CD4-positive, alpha-beta T cell (primary cell): ENCODE measurements at regions of chr6 and their contacts with region 1.

Region 1: DNA sequence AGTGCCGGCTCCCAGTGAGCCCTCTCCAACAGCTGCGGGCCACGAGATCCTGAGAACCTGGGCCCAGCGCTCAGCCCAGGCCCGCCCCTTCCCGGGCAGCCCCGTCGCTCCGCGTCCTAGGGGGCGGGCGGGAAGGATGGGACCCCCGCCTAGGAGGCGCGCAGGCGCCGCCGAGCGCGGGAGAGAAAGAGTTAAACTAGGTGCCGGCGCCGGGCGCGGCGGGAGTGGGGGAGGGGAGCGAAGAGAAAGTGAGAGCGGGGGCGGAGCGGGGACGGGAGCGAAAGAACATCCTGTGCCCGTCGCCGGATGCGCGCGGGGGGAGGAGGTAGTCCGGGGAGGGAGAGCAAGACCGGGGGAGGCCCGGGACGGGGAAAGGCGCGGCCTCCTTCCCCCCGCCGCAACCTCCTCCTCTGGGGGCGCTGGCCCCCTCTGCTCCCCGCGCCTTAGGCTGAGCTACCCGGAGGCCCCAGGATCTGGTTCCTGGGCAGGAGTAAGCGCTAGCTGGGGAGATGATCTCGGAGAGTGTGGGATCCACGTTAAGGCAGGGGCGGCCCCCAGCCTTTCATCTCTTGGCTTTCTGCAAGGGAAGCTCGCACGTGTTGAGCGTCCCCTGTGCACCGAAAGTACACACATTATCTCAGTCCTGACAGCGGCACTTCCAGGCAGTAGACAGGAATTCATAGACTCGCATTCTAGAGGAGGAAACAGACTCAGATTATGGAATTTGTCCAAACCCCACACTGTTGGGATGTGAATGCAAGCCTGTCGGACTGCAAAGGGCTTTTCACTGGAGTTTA is 4.9 kb upstream of the ARMC12 start:
- DNase-seq: peak; percentile 88 to 98 (median 94)
- ATAC-seq: peak; percentile 55
- H3K4me3 ChIP-seq: peak overlapping the region; percentile 87
- H3K4me3 Mint-ChIP-seq: peak overlapping the region; percentile 96
- H3K27ac ChIP-seq: peak overlapping the region; percentile 94 to 96
- H3K27ac Mint-ChIP-seq: peak overlapping the region; percentile 87
- H3K4me1 ChIP-seq: peaks cover 97% of the 10 kb centered on the region
- H3K4me1 Mint-ChIP-seq: peaks cover 92% of the 10 kb centered on the region
- H3K27me3 ChIP-seq: no peaks in the 10 kb centered on the region
- H3K27me3 Mint-ChIP-seq: no peaks in the 10 kb centered on the region
- CTCF ChIP-seq: no peak

Region 2: DNA sequence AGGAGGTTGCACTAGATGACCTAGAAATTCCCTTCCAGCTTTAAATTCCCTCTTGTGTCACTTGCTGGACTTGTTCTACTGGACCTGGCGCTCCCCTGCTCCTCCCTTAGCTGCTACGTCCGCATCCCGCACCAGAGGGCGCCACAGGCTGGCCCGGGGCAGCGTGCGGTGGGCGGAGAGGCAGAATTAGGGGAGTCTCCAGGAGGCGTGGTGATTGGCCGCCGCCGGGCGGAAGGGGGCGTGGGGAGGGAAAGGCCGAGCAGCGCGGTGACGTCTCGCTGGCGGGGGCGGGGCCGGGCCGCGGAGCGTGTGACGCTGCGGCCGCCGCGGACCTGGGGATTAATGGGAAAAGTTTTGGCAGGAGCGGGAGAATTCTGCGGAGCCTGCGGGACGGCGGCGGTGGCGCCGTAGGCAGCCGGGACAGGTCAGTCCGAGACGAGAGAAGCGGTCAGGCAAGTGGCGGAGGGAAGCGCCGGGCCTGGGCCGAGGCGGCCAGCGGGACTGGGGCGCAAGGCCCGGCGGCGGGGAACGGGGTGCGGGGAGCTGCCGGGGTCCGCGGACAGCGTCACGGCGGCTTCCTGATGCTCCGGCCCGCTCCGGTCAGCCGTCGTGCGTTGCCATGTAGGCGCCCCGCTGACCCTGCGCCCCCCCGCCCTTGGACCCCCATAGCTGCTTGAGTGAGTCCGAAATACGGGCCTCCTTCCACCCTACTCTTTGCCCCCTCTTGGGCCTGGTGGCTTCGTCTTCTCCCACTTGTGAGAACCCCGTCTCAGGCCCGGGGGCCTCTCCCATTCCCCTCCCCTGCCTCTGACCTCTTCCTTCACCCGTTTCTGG is 389.5 kb before region 1 on chr6 and contains the start of gene PPARD:
- CTCF ChIA-PET with region 1: no interaction called
- POLR2A ChIA-PET with region 1: interaction called, 5 read pairs
- intact Hi-C with region 1: loop called (anchors 2 to 5 kb)
- DNase-seq: peak; percentile 94 to 98 (median 97)
- ATAC-seq: peak; percentile 97
- H3K4me3 ChIP-seq: peak within 1 kb of the TSS; percentile 87
- H3K4me3 Mint-ChIP-seq: peak within 1 kb of the TSS; percentile 98
- H3K27ac ChIP-seq: peak within 1 kb of the TSS; percentile 70 to 87
- H3K27ac Mint-ChIP-seq: peak within 1 kb of the TSS; percentile 89
- H3K4me1 ChIP-seq: peaks cover 51% of the 10 kb centered on the region
- H3K4me1 Mint-ChIP-seq: peaks cover 59% of the 10 kb centered on the region
- H3K27me3 ChIP-seq: no peaks in the 10 kb centered on the region
- H3K27me3 Mint-ChIP-seq: no peaks in the 10 kb centered on the region
- CTCF ChIP-seq: peak; percentile 96
- total RNA-seq, gene PPARD: 34.1 to 37.0 TPM

Region 3: DNA sequence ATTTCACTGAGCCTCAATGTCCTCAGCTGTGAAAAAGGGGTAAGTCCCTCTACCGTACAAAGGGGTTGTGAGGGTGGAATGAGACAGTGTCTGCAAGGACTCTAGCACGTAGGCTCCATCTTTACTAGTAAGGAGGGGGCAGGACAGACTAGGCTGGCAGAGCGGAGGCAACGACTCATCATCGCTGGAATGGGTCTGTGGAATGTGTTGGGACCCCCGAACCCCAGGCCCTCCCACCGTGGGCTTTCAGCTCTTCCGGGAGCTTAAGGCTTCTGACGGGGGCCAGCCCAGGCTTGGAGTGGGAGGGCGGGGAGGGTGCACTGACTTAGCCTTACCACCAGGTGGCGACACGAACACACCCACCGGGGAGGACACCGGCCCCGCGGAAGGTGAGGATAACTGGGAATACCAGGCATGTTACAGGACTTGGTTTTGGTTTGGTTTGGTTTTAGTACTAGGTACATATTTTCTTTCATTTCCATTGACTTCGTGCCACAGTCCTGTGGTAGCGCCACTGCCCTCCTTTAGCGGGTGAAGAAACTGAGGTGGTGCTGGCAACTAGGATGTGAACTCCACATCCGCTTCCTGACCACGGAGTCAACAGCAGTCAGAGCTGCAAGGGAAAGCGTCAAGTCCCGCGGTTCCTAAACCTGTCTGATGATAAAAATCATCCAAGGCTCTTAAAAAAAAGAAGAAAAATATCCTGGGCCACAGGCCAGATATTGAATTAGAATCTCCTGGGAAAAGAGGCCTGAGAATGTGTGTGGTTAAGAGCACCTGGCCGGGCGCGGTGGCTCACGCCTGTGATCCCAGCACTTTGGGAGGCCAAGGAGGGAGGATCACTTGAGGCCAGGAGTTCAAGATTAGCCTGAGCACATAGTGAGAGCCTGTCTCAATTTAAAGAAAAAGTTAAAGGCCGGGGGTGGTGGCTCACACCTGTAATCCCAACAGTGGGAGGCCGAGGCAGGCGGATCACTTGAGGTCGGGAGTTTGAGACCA is 209.0 kb before region 1 on chr6:
- CTCF ChIA-PET with region 1: interaction called, 13 read pairs
- POLR2A ChIA-PET with region 1: interaction called, 3 read pairs
- intact Hi-C with region 1: loop called (anchors 1 kb)
- DNase-seq: peak; percentile 61 to 91 (median 66)
- ATAC-seq: peak; percentile 88
- H3K4me3 ChIP-seq: peak overlapping the region; percentile 35
- H3K4me3 Mint-ChIP-seq: peak overlapping the region; percentile 79
- H3K27ac ChIP-seq: no peak overlapping the region
- H3K27ac Mint-ChIP-seq: peak overlapping the region; percentile 82
- H3K4me1 ChIP-seq: peaks cover 31% of the 10 kb centered on the region
- H3K4me1 Mint-ChIP-seq: peaks cover 14% of the 10 kb centered on the region
- H3K27me3 ChIP-seq: no peaks in the 10 kb centered on the region
- H3K27me3 Mint-ChIP-seq: no peaks in the 10 kb centered on the region
- CTCF ChIP-seq: peak; percentile 98

Region 4: DNA sequence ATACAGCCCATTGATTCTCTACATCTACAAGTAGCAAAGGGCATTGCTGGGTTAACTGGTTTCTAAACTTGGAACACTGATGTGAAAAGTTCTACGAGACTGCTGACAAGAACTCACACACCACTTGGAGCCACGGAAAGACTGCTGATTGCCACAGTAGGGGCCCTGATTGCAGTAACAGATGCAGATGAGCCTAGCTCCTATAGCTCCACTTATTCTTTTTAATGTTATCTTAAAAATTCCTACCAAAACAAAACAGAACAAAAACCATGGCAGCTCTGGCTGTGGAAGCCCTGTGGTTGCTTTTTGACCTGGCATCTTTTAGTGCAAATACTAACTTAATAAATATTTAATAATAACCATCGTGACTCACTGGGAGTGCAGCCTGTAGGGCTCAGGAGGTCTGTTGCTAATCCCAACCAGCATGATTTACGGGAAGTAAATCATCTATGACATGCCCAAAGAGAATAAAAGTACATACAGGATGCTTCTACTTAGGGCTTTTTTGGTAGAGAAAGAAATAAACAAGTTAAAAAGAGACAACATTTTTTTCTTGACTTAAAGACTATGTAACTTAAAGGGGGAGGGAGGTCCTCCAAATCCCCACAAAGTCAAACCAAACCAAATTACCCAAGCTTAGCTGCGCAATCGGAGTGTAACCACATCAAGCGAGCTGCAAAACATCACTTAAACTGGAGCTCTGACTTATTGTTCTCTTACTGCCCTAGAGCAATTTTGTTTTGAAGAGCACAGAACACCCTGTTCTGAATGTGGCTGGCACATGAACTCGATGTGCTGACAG is 130.4 kb before region 1 on chr6:
- CTCF ChIA-PET with region 1: interaction called, 17 read pairs
- POLR2A ChIA-PET with region 1: interaction called, 96 read pairs
- intact Hi-C with region 1: loop called in 1 of 2 experiments (anchors 5 kb)
- DNase-seq: peak; percentile 50 to 93 (median 64)
- ATAC-seq: peak; percentile 74
- H3K4me3 ChIP-seq: peak overlapping the region; percentile 42
- H3K4me3 Mint-ChIP-seq: peak overlapping the region; percentile 82
- H3K27ac ChIP-seq: peak overlapping the region; percentile 52 to 82
- H3K27ac Mint-ChIP-seq: peak overlapping the region; percentile 85
- H3K4me1 ChIP-seq: peaks cover 70% of the 10 kb centered on the region
- H3K4me1 Mint-ChIP-seq: peaks cover 87% of the 10 kb centered on the region
- H3K27me3 ChIP-seq: no peaks in the 10 kb centered on the region
- H3K27me3 Mint-ChIP-seq: no peaks in the 10 kb centered on the region
- CTCF ChIP-seq: no peak

Region 5: GRCh38 chr6:35663447-35664235 is 68.3 kb before region 1 on chr6:
- CTCF ChIA-PET with region 1: interaction called, 17 read pairs
- POLR2A ChIA-PET with region 1: interaction called, 11 read pairs
- intact Hi-C with region 1: loop called in 1 of 2 experiments (anchors 2 kb)
- DNase-seq: peak in 4 of 14 experiments; percentile 30 to 56 (median 50)
- ATAC-seq: peak; percentile 77
- H3K4me3 ChIP-seq: peak overlapping the region; percentile 10
- H3K4me3 Mint-ChIP-seq: no peak overlapping the region
- H3K27ac ChIP-seq: peak overlapping the region; percentile 54 to 55
- H3K27ac Mint-ChIP-seq: no peak overlapping the region
- H3K4me1 ChIP-seq: peaks cover 47% of the 10 kb centered on the region
- H3K4me1 Mint-ChIP-seq: peaks cover 26% of the 10 kb centered on the region
- H3K27me3 ChIP-seq: no peaks in the 10 kb centered on the region
- H3K27me3 Mint-ChIP-seq: no peaks in the 10 kb centered on the region
- CTCF ChIP-seq: no peak

Region 6: GRCh38 chr6:35688581-35689322 is 43.2 kb before region 1 on chr6 and contains the start of gene FKBP5:
- CTCF ChIA-PET with region 1: interaction called, 20 read pairs
- POLR2A ChIA-PET with region 1: interaction called, 69 read pairs
- intact Hi-C with region 1: loop called (anchors 1 kb)
- DNase-seq: peak; percentile 73 to 94 (median 83)
- ATAC-seq: peak; percentile 88
- H3K4me3 ChIP-seq: peak within 1 kb of the TSS; percentile 98
- H3K4me3 Mint-ChIP-seq: peak within 1 kb of the TSS; percentile 99
- H3K27ac ChIP-seq: peak within 1 kb of the TSS; percentile 64 to 67
- H3K27ac Mint-ChIP-seq: peak within 1 kb of the TSS; percentile 91
- H3K4me1 ChIP-seq: peaks cover 22% of the 10 kb centered on the region
- H3K4me1 Mint-ChIP-seq: peaks cover 19% of the 10 kb centered on the region
- H3K27me3 ChIP-seq: no peaks in the 10 kb centered on the region
- H3K27me3 Mint-ChIP-seq: no peaks in the 10 kb centered on the region
- CTCF ChIP-seq: no peak
- total RNA-seq, gene FKBP5: 72.6 to 75.9 TPM

Region 7: GRCh38 chr6:35850208-35850607 is 118.3 kb after region 1 on chr6:
- CTCF ChIA-PET with region 1: no interaction called
- POLR2A ChIA-PET with region 1: no interaction called
- intact Hi-C with region 1: no loop called
- DNase-seq: no peak
- ATAC-seq: no peak
- H3K4me3 ChIP-seq: no peak overlapping the region
- H3K4me3 Mint-ChIP-seq: no peak overlapping the region
- H3K27ac ChIP-seq: no peak overlapping the region
- H3K27ac Mint-ChIP-seq: no peak overlapping the region
- H3K4me1 ChIP-seq: no peaks in the 10 kb centered on the region
- H3K4me1 Mint-ChIP-seq: no peaks in the 10 kb centered on the region
- H3K27me3 ChIP-seq: no peaks in the 10 kb centered on the region
- H3K27me3 Mint-ChIP-seq: no peaks in the 10 kb centered on the region
- CTCF ChIP-seq: no peak

Region 8: DNA sequence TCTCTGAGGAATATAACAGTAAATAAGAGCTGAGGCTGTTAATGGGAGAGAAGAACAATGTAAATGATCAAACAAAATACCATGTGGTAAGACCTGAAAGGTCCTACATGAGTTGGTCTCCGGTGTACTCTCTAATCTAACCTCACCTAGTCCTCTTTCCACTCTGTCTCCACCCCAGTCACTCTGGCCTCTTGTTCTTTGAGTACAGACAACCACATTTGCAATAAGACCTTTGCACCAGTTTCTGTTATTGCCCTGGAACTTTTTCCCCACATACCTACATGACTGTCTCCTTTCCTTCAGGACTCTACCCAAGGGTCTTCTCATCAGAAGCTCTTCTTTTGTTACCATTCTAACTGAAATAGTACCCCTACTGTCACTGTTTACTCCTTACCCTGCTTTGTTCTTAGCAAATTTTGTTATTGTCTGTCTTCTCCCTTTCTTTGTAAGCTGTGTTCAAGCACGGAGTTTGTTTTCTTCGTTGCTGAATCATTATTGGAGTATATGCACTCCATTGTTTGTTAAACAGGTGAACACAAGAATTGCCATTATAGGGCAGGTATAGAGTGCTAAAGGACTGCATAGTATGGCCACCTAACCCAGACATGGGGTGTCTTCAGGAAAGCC is 332.9 kb after region 1 on chr6:
- CTCF ChIA-PET with region 1: no interaction called
- POLR2A ChIA-PET with region 1: no interaction called
- intact Hi-C with region 1: no loop called
- DNase-seq: no peak
- ATAC-seq: no peak
- H3K4me3 ChIP-seq: no peak overlapping the region
- H3K4me3 Mint-ChIP-seq: no peak overlapping the region
- H3K27ac ChIP-seq: no peak overlapping the region
- H3K27ac Mint-ChIP-seq: peak overlapping the region; percentile 61
- H3K4me1 ChIP-seq: peaks cover 6% of the 10 kb centered on the region
- H3K4me1 Mint-ChIP-seq: peaks cover 80% of the 10 kb centered on the region
- H3K27me3 ChIP-seq: no peaks in the 10 kb centered on the region
- H3K27me3 Mint-ChIP-seq: no peaks in the 10 kb centered on the region
- CTCF ChIP-seq: no peak

Region 9: DNA sequence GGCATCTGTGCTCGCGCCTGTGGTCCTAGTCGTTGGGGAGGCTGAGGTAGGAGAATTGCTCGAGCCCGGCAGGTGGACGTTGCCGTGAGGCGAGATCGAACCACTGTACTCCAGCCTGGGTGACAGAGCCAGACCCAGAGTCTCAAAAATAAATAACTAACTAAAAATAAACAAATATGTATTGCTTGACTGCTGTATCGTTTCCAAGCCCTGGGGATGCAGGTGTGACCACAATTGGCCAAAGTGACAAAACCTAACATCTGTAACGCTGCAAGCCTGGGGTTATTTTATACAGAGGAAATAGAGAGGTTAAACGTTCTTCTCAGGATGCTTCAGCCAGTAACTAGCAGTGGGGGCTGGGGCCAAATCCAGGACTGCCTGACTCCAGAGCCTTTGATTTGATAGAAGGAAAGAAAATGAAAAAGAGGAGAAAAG is 860.3 kb after region 1 on chr6:
- CTCF ChIA-PET with region 1: no interaction called
- POLR2A ChIA-PET with region 1: no interaction called
- intact Hi-C with region 1: no loop called
- DNase-seq: peak in 2 of 14 experiments; percentile 17 to 45
- ATAC-seq: no peak
- H3K4me3 ChIP-seq: no peak overlapping the region
- H3K4me3 Mint-ChIP-seq: peak overlapping the region; percentile 74
- H3K27ac ChIP-seq: peak overlapping the region; percentile 21 to 48
- H3K27ac Mint-ChIP-seq: peak overlapping the region; percentile 97
- H3K4me1 ChIP-seq: peaks cover 30% of the 10 kb centered on the region
- H3K4me1 Mint-ChIP-seq: peaks cover 38% of the 10 kb centered on the region
- H3K27me3 ChIP-seq: no peaks in the 10 kb centered on the region
- H3K27me3 Mint-ChIP-seq: peaks cover 5% of the 10 kb centered on the region
- CTCF ChIP-seq: no peak

Region 10: GRCh38 chr6:37516076-37516919 is 1784.4 kb after region 1 on chr6:
- CTCF ChIA-PET with region 1: no interaction called
- POLR2A ChIA-PET with region 1: no interaction called
- intact Hi-C with region 1: loop called in 1 of 2 experiments (anchors 5 kb)
- DNase-seq: peak; percentile 80 to 99 (median 86)
- ATAC-seq: peak; percentile 83
- H3K4me3 ChIP-seq: peak overlapping the region; percentile 64
- H3K4me3 Mint-ChIP-seq: peak overlapping the region; percentile 83
- H3K27ac ChIP-seq: peak overlapping the region; percentile 93 to 100
- H3K27ac Mint-ChIP-seq: peak overlapping the region; percentile 97
- H3K4me1 ChIP-seq: peaks cover 94% of the 10 kb centered on the region
- H3K4me1 Mint-ChIP-seq: peaks cover 76% of the 10 kb centered on the region
- H3K27me3 ChIP-seq: no peaks in the 10 kb centered on the region
- H3K27me3 Mint-ChIP-seq: no peaks in the 10 kb centered on the region
- CTCF ChIP-seq: no peak